HepG2 (cell line): ENCODE measurements at regions of chr6 and their contacts with region 1.

Region 1: DNA sequence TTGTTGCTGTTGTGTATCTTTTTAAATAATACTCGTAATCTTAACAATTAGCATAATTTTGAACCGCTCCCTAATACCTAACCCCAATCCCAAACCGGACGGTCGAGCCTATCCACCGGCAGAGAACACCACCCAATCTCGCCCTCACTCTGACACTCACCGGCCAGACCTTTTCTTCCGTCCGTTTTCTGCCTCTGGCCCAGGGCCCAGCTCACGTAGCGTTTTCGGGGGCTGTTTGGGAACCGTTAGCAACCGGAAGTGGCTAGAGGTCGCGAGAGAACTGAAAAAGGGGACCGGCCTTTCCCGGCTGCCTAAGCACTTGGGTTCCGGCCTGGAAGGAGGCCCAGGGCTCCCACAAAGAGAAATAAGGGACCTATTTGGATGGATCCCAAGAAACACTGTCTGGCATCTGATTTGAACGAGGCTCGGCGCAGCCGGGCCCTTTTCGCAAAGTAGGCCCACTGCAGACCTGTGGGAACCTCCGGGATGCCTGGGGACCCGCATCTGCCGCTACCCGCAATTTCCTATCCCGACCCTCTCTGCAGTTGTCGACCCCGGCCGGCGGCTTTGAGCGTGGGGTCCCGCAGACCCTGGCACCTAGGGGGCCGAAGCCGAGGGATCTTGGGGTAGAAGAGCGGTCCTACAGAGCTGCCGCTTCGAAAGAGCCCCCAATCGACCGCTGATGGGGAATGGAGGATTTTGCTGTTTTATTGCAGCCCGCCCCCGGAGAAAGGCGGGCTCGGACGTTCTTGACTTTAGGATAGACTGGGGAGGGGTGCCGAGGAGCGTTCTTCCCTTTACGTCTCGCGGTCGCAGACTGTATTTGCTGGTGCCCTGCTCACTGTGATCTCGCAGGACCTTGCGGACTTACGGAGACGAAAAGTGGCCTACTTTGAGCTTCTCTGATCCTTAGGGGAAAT is 4.8 kb upstream of the ZKSCAN8 start:
- DNase-seq: peak; percentile 94
- ATAC-seq: peak; percentile 84
- H3K4me3 ChIP-seq: peak overlapping the region; percentile 81 to 91 (median 86)
- H3K27ac ChIP-seq: peak overlapping the region; percentile 82
- H3K4me1 ChIP-seq: peaks cover 54% of the 10 kb centered on the region
- H3K27me3 ChIP-seq: no peaks in the 10 kb centered on the region; a peak in 1 of 5 replicates
- CTCF ChIP-seq: peak; percentile 37
- EP300 ChIP-seq: peak in 1 of 2 experiments; percentile 56; a peak in 3 of 4 replicates
- POLR2A ChIP-seq: peak; percentile 83 to 84
- RAD21 ChIP-seq: peak; percentile 63

Region 2: GRCh38 chr6:28104392-28105244 is 32.2 kb before region 1 on chr6:
- CTCF ChIA-PET with region 1: no interaction called
- POLR2A ChIA-PET with region 1: interaction called, 22 read pairs
- in situ Hi-C with region 1: no loop called
- intact Hi-C with region 1: loop called (anchors 2 kb)
- DNase-seq: peak; percentile 80
- ATAC-seq: peak; percentile 100
- H3K4me3 ChIP-seq: peak overlapping the region; percentile 62 to 84 (median 71)
- H3K27ac ChIP-seq: peak overlapping the region; percentile 35
- H3K4me1 ChIP-seq: peaks cover 15% of the 10 kb centered on the region
- H3K27me3 ChIP-seq: no peaks in the 10 kb centered on the region; a peak in 1 of 5 replicates
- CTCF ChIP-seq: peak; percentile 84
- EP300 ChIP-seq: 0 out of 4 replicates have a peak, but pooled peaks of 1 of the 2 experiments have one; percentile 24
- POLR2A ChIP-seq: peak; percentile 73 to 92
- RAD21 ChIP-seq: peak; percentile 72

Region 3: DNA sequence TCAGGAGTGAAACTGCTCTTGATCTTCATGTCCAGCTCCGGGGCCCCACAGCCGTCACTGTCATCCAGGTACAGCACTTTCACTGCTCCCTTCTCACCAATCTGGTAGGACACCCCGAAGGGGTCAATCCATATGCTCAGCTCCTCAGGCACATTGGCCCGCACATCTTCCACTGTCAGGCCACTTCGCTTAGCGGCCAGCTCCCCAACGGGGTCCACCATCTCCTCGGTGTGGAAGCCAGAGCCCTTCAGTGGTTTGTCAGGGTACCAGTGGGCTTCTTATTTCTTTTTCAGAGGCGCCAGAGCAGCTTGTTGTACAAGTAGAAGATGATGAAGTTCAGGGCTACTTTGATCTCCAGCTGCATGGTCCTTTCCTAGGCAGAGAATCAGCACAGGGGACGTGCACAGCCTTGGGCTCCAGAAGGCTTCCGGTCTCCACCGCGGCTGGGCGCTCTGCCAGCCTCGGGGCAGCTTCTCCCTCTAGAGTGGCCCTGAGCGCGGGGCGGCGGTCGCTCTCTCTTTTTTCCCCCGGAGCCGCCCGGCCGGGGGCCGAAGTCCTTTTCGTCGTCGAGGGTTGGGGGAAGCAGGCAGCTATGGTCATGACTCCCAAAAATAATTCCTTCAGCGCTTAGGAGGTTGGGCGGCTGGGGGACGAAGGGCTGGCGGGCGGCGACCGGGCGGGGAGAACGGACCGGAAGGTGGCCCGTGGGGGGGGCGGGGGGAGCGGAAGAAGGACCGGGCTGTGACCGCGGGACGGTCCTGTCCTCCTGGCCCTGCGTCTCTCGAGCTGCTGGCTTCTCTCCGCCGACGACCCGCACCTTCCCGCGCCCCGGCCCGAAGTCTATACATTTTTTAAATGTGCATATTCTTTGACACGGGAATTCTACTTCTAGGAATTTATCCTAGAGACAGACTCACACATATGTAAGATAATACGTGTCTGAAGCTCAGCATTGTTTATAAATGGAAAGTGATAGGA is 81.7 kb after region 1 on chr6:
- CTCF ChIA-PET with region 1: no interaction called
- POLR2A ChIA-PET with region 1: interaction called, 37 read pairs
- in situ Hi-C with region 1: loop called (anchors 5 kb)
- intact Hi-C with region 1: no loop called
- DNase-seq: peak; percentile 70
- ATAC-seq: peak; percentile 93
- H3K4me3 ChIP-seq: peak overlapping the region; percentile 53 to 77 (median 56)
- H3K27ac ChIP-seq: peak overlapping the region; percentile 79
- H3K4me1 ChIP-seq: peaks cover 55% of the 10 kb centered on the region
- H3K27me3 ChIP-seq: no peaks in the 10 kb centered on the region; a peak in 1 of 5 replicates
- CTCF ChIP-seq: peak; percentile 49
- EP300 ChIP-seq: no peak
- POLR2A ChIP-seq: peak; percentile 42 to 77; a peak in 2 of 4 replicates
- RAD21 ChIP-seq: peak; percentile 50

Region 4: DNA sequence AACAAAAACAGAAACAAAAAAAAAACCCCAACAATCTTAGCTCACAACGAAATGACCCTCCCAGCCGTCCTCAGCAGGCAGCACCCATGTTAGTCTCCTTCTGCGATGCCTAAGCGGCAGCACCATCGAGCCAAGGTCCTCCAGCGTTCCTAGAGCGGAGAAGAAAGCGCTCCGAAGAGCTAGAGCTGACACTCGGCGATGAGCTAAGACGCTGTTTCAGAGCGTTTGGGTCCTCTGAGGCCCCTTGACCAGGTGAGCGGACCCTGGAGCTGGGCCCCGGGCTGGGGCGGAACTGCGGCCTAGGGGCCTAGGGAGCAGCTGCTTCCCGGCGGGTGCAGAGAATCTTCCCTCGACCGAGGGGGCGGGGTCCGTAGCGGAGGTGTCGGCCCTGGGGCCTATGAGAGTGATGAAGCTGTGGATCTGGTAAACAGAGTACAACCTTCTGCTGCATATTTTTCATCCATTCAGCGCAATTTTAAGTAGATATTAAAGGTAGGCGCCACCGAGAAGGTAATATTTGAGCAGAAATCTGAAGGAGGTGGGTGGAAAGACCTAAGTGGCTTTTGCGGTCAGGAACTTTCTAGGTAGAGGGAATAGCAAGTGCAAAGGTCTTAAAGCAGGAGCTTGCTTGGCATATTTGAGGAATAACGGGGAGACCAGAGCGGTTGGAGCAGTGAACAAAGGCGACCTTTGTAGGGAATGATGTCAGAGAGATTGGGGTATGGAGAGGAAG is 130.3 kb after region 1 on chr6 and contains the start of gene ZSCAN26:
- CTCF ChIA-PET with region 1: no interaction called
- POLR2A ChIA-PET with region 1: interaction called, 15 read pairs
- in situ Hi-C with region 1: no loop called
- intact Hi-C with region 1: loop called (anchors 1 kb)
- DNase-seq: peak; percentile 83
- ATAC-seq: peak; percentile 99
- H3K4me3 ChIP-seq: peak within 1 kb of the TSS; percentile 85 to 91 (median 87)
- H3K27ac ChIP-seq: peak within 1 kb of the TSS; percentile 51
- H3K4me1 ChIP-seq: peaks cover 26% of the 10 kb centered on the region
- H3K27me3 ChIP-seq: peaks cover 0 to 11% of the 10 kb centered on the region in 2 experiments; a peak in 3 of 5 replicates
- CTCF ChIP-seq: peak; percentile 22; the same call in 1 of the 2 replicates
- EP300 ChIP-seq: peak; percentile 3 to 44; a peak in 1 of 4 replicates
- POLR2A ChIP-seq: peak; percentile 79 to 81
- RAD21 ChIP-seq: no peak; the same call in 1 of the 2 replicates
- total RNA-seq, gene ZSCAN26: 15.6 and 18.5 TPM in 2 replicates

Region 5: GRCh38 chr6:28355743-28356665 is 219.2 kb after region 1 on chr6:
- CTCF ChIA-PET with region 1: interaction called, 13 read pairs
- POLR2A ChIA-PET with region 1: interaction called, 24 read pairs
- in situ Hi-C with region 1: loop called (anchors 5 kb)
- intact Hi-C with region 1: loop called (anchors 1 kb)
- DNase-seq: peak; percentile 90
- ATAC-seq: peak; percentile 89
- H3K4me3 ChIP-seq: peak overlapping the region; percentile 70 to 82 (median 77)
- H3K27ac ChIP-seq: peak overlapping the region; percentile 75
- H3K4me1 ChIP-seq: peaks cover 33% of the 10 kb centered on the region
- H3K27me3 ChIP-seq: no peaks in the 10 kb centered on the region; a peak in 1 of 5 replicates
- CTCF ChIP-seq: peak; percentile 91
- EP300 ChIP-seq: no peak
- POLR2A ChIP-seq: peak in 1 of 2 experiments; percentile 65; a peak in 1 of 4 replicates
- RAD21 ChIP-seq: peak; percentile 81

Region 6: DNA sequence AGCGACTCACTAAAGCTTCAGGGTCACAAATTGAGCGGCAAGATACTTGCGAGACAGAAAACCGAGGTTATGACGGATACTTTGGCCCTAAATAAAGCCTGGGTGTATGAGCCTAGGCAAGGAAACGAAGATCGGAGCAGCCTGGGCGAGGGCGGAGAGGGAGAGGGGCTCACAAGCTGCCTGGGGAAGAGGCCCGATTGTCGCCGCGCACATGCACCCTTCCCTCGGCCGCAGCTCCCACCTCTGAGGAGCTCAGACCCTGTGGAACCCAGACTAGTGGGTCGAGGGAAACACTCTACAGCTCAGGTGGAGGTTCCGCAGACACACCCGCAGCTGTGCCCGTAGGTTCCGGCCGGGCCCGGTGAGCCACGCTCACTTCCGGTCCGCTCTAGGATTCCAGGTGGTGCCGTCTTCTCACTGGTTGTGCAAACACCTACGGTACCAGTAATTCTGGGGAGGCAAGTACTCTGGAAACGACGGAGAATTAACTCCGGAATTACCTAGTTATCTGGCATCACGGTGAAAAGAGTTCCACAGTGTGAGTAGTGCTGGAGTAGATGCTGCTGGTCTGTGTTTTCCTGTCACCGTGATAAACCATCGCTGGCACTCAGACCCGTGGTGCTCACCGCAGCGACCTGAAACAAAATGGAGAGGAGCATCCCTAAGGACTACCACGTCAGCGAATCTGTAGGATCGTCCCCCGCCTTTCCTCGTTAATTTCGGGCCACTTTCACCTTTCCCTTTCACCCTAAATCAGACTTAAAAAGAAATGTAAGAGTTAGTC is 450.3 kb after region 1 on chr6:
- CTCF ChIA-PET with region 1: no interaction called
- POLR2A ChIA-PET with region 1: interaction called, 5 read pairs
- in situ Hi-C with region 1: no loop called
- intact Hi-C with region 1: loop called (anchors 5 kb)
- DNase-seq: peak; percentile 82
- ATAC-seq: peak; percentile 93
- H3K4me3 ChIP-seq: peak overlapping the region; percentile 74 to 86 (median 82)
- H3K27ac ChIP-seq: peak overlapping the region; percentile 62
- H3K4me1 ChIP-seq: peaks cover 50% of the 10 kb centered on the region
- H3K27me3 ChIP-seq: no peaks in the 10 kb centered on the region; a peak in 1 of 5 replicates
- CTCF ChIP-seq: peak; percentile 44; the same call in 1 of the 2 replicates
- EP300 ChIP-seq: peak in 1 of 2 experiments; percentile 35; a peak in 1 of 4 replicates
- POLR2A ChIP-seq: peak; percentile 86 to 98
- RAD21 ChIP-seq: peak; percentile 45; the same call in 1 of the 2 replicates